Sciatic nerve (tissue), 2 donors: ENCODE measurements at regions of chrX and their contacts with region 1.

Region 1: GRCh38 chrX:151753313-151754041 is 18.9 kb downstream of the CNGA2 start:
- DNase-seq: peak; percentile 76
- ATAC-seq: peak; percentile 92

Region 2: DNA sequence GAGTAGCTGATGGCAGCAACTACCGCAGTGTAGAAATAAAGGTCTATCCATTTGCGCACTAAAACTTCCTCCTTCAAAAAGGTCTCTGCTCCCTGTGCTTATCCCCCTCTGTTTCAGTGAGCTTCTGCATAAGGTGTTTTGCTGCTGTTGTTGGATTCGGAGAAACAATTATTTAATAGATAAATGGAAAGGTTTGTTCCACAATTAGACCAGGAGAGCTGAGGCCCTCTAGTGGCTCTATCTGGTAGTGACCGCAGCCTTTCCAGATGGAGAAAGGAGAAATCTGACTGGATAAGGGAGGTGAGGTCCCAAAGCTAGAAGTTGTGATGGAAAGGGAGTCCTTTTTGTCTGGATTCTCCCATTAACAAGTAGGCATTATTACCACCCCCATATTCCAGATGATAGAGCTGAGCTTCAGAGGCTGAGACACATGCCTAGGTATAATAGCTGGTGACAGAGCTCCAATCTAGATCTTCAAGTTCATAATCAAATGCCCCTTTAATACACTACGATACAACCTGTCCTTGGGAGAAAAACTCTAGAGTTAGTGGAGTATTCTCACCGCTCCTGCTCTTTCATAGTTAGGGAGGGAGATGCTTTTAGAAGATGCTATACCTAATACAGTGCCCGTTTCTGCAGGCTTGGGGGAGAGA is 879.1 kb after region 1 on chrX:
- intact Hi-C with region 1: loop called (anchors 2 kb)
- DNase-seq: peak; percentile 70
- ATAC-seq: no peak

Region 3: GRCh38 chrX:153438531-153438930 is 1685.1 kb after region 1 on chrX:
- intact Hi-C with region 1: no loop called
- DNase-seq: no peak
- ATAC-seq: no peak